ENCODE measurements at regions of chr14 and their contacts with region 1.

Region 1: DNA sequence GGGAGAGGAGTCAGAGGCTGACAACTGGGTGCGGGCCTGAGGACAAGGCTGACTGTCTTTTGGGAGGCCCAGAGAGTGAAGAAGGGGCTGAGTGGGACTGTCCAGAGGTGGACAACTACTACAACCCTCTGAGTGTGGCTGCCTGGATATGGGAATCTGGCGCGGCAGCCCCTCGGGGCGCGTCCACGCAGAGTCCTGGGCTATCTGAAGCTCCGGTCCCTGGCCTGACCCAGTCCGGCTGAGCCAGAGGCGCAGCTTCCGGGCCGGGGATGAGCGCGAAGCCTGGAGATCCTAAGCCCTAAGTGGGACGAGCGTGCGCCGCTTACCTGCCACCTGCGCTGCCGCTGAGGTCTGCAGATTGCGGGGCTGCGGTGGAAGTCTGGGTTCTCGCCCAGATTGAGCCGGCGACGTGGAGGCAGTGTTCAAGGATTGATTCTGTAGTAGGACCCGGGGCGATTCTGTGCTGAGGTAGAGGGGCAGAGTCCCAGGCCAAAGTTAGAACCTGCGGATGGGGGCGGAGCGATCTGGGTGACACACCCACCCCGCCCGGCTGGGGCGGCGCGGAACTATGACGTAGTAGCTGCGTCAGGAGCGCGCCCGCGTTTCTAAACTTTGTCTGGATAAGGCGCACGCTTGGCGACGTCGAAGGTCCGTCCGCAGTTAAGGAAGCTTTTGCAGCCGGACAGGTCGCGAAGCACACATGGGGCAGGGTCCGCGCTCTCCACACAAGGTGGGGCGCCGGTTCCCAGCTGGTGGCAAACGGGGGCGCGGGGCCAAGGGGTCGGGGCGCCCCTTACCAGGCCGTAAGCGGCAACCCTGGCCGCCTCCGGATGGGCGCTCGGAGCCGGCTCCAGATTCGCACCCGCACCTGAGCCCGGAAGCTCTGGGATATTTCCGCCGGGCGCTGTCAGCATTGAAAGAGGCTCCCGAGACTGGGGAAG is at the starts of genes DHRS1 and NOP9:
- DNase-seq: peak; percentile 93
- ATAC-seq: peak; percentile 78
- H3K4me3 Mint-ChIP-seq: peak within 1 kb of the TSS; percentile 95
- H3K27ac Mint-ChIP-seq: peak within 1 kb of the TSS; percentile 94
- H3K4me1 Mint-ChIP-seq: peaks cover 51% of the 10 kb centered on the region
- H3K27me3 Mint-ChIP-seq: no peaks in the 10 kb centered on the region
- CTCF ChIP-seq: no peak
- total RNA-seq, gene DHRS1: 32.5 and 33.9 TPM in 2 replicates
- total RNA-seq, gene NOP9: 30.5 and 36.4 TPM in 2 replicates

Region 2: GRCh38 chr14:24051789-24052655 is 247.5 kb before region 1 on chr14 and contains the start of gene CARMIL3:
- CTCF ChIA-PET with region 1: no interaction called
- POLR2A ChIA-PET with region 1: no interaction called
- intact Hi-C with region 1: loop called (anchors 1 kb)
- DNase-seq: peak; percentile 69
- ATAC-seq: peak; percentile 86
- H3K4me3 Mint-ChIP-seq: peak within 1 kb of the TSS; percentile 82
- H3K27ac Mint-ChIP-seq: peak within 1 kb of the TSS; percentile 71
- H3K4me1 Mint-ChIP-seq: peaks cover 34% of the 10 kb centered on the region
- H3K27me3 Mint-ChIP-seq: peaks cover 6% of the 10 kb centered on the region
- CTCF ChIP-seq: no peak
- total RNA-seq, gene CARMIL3: 3.5 and 3.9 TPM in 2 replicates

Region 3: DNA sequence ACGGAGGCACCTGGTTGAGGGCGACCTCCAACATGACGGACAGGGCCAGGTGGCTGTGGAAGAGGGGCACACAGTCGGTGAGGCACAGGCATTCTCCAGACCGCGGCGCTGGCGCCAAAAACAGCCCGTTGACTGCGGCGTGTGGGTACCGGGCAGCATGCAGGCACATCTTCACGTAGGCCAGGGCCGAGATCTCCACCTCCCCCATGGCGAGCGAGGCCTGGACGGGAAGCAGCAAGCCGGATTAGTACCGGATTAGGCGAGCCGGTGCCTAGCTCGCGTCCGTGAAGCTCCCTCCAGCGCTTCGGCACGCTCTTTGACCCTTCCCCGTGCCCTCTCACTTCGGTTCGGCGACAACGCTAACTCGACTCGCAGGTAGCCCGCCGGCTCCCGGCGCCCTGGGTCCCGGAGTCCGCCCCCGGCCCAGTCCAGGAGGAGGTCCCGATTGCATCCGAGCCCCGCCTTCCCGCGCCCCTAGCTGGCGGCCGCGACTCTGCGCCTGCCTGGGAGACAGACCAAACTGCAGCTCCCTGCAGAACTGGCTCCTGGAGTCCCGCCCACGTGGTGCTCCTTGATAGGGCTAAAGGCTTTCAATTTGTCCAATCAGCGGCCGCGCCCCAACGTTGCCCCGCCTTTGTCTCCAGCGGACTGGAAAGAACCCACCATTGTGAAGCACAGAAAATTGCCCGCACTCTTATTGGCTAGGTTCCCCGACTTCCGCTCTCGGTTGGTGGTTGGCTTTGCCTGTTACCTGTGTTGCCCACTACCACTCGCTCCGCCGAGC is 158.2 kb before region 1 on chr14 and contains the start of gene EMC9:
- CTCF ChIA-PET with region 1: no interaction called
- POLR2A ChIA-PET with region 1: no interaction called
- intact Hi-C with region 1: loop called (anchors 1 kb)
- DNase-seq: peak; percentile 92
- ATAC-seq: peak; percentile 90
- H3K4me3 Mint-ChIP-seq: peak within 1 kb of the TSS; percentile 83
- H3K27ac Mint-ChIP-seq: peak within 1 kb of the TSS; percentile 87
- H3K4me1 Mint-ChIP-seq: peaks cover 78% of the 10 kb centered on the region
- H3K27me3 Mint-ChIP-seq: no peaks in the 10 kb centered on the region
- CTCF ChIP-seq: no peak
- total RNA-seq, gene EMC9: 22.5 and 22.6 TPM in 2 replicates

Region 4: GRCh38 chr14:24215495-24216344 is 83.8 kb before region 1 on chr14 and contains the start of gene MDP1:
- CTCF ChIA-PET with region 1: interaction called, 37 read pairs
- POLR2A ChIA-PET with region 1: interaction called, 30 read pairs
- intact Hi-C with region 1: loop called (anchors 1 kb)
- DNase-seq: peak; percentile 71
- ATAC-seq: peak; percentile 75
- H3K4me3 Mint-ChIP-seq: peak within 1 kb of the TSS; percentile 93
- H3K27ac Mint-ChIP-seq: peak within 1 kb of the TSS; percentile 95
- H3K4me1 Mint-ChIP-seq: peaks cover 50% of the 10 kb centered on the region
- H3K27me3 Mint-ChIP-seq: no peaks in the 10 kb centered on the region
- CTCF ChIP-seq: no peak
- total RNA-seq, gene MDP1: 12.7 and 16.3 TPM in 2 replicates

Region 5: DNA sequence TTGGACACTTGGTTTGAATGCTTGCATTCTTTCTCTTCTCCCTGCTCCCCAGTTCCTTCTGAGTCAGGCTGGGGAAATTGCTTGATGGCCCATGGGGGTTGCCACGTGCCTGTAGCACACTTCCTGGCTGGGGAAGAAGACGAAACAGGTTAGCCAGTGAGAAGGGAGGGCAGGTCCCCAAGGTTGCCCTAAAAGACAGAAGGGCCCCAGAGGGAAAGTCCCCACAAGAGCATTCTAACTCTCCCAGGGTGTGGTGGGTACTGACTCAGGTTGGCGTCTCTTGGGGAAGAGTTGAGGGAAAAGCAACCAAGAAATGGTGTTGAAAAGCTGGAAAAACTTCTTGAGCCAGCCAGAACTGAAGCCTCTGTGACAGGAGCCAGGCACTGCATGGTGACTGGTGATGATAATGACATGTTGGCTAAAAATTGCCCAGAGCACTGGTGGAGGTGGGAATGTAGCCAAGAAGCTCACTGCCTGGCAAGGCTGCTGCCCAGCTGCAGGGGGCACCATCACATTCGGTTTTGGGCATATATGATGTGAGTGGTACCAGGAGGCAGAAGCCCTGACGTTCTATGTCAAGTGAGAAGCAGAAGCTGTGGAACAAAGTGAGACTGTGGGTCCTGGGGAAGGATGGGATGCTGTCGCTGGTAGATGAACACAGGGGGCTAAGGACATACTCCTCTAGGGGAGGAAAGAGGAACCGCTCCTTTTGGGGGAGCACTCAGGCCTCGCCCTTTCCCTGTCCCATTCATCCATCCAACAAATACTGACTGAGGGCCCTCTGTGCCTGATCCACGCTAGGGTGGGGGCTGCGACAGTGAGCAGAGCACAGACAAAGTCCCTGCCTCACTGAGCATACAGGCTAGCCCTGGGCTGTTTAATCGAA is 20.0 kb before region 1 on chr14:
- CTCF ChIA-PET with region 1: interaction called, 64 read pairs
- POLR2A ChIA-PET with region 1: interaction called, 97 read pairs
- intact Hi-C with region 1: loop called (anchors 1 kb)
- DNase-seq: peak; percentile 54
- ATAC-seq: peak; percentile 89
- H3K4me3 Mint-ChIP-seq: peak overlapping the region; percentile 63
- H3K27ac Mint-ChIP-seq: peak overlapping the region; percentile 90
- H3K4me1 Mint-ChIP-seq: peaks cover 73% of the 10 kb centered on the region
- H3K27me3 Mint-ChIP-seq: no peaks in the 10 kb centered on the region
- CTCF ChIP-seq: no peak